ENCODE measurements at regions of chr6 and their contacts with region 1.

Region 1: GRCh38 chr6:25417046-25417605 is 138.0 kb downstream of the CARMIL1 start:
- DNase-seq: no peak
- H3K4me3 Mint-ChIP-seq: no peak overlapping the region
- H3K27ac Mint-ChIP-seq: no peak overlapping the region
- H3K4me1 Mint-ChIP-seq: peaks cover 62% of the 10 kb centered on the region
- H3K27me3 Mint-ChIP-seq: no peaks in the 10 kb centered on the region
- CTCF ChIP-seq: no peak

Region 2: DNA sequence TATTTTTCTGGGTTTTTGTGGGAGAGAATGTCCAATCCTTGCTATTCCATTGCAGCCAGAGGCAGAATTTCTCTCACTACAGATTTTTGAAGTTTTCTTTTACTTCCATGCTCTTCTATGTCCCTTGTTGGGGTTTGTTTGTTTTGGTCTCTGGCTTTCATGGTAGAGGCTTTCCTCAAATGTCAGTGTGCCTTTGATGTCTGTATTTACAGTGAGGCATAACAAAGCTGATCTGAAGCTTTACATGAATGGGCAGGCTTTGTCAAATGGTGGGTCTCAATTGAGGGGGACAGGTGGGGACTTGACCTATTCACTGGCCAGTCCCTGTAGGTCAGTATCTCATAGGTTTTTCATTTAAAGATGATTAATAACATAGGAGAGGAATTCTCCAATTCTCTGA is 146.6 kb before region 1 on chr6:
- CTCF ChIA-PET with region 1: interaction called, 10 read pairs
- intact Hi-C with region 1: no loop called
- DNase-seq: no peak
- H3K4me3 Mint-ChIP-seq: no peak overlapping the region
- H3K27ac Mint-ChIP-seq: no peak overlapping the region
- H3K4me1 Mint-ChIP-seq: peaks cover 14% of the 10 kb centered on the region
- H3K27me3 Mint-ChIP-seq: no peaks in the 10 kb centered on the region
- CTCF ChIP-seq: no peak

Region 3: DNA sequence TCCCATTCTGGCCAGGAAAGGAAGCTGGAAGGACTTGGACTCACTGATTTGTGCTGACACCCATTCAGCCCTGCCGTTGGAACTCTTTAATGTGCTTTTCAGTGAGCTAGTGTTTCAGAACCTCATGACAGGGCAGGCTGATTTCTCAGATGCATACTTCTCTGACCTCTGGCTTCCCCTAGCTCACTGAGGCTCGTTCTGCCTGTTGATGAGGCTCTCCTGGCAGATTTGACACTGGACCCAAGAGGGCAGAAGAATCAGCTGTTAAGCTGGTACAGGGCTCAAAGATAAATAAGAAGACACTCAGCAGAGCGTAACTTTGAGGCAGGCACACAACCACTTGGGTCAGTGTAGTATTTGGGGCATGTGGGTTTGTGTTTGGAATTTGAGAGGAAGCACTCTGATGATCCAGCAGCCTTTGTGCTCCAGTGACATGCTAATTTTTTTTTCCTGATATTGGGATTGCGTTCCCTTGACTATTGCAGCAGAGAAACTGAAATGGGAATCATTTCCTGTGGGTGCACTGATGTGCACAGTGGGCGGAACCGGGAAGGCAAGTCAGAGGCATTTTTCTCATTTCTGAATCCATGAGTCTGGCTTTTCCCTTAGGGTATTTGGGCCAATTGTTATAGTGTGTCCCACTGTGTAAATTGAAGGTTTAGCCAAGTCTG is 57.8 kb before region 1 on chr6:
- CTCF ChIA-PET with region 1: no interaction called
- intact Hi-C with region 1: loop called (anchors 5 kb)
- DNase-seq: peak; percentile 31
- H3K4me3 Mint-ChIP-seq: peak overlapping the region; percentile 48
- H3K27ac Mint-ChIP-seq: peak overlapping the region; percentile 71
- H3K4me1 Mint-ChIP-seq: peaks cover 57% of the 10 kb centered on the region
- H3K27me3 Mint-ChIP-seq: no peaks in the 10 kb centered on the region
- CTCF ChIP-seq: no peak

Region 4: GRCh38 chr6:25369433-25370181 is 47.5 kb before region 1 on chr6:
- CTCF ChIA-PET with region 1: interaction called, 3 read pairs
- intact Hi-C with region 1: loop called (anchors 5 kb)
- DNase-seq: peak; percentile 38
- H3K4me3 Mint-ChIP-seq: peak overlapping the region; percentile 56
- H3K27ac Mint-ChIP-seq: peak overlapping the region; percentile 60
- H3K4me1 Mint-ChIP-seq: peaks cover 83% of the 10 kb centered on the region
- H3K27me3 Mint-ChIP-seq: no peaks in the 10 kb centered on the region
- CTCF ChIP-seq: no peak

Region 5: DNA sequence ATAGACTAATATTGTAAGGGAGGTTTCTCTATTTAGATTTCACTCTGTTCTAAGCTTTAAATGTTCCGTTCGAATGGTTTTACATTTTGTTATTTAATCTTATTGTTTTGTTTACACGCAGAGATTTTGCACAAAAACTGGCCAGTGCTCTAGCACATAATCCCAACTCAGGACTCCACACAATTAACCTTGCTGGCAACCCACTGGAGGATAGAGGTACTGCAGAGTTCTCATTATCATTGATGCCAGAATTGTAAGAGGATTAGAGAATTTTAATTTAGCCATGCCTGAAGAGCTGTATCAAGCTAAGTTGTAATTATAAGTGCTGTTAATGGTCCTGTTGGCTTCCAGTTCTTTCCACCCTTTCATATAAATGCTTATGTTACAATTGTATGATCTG is 55.2 kb after region 1 on chr6:
- CTCF ChIA-PET with region 1: no interaction called
- intact Hi-C with region 1: loop called (anchors 5 kb)
- DNase-seq: no peak
- H3K4me3 Mint-ChIP-seq: no peak overlapping the region
- H3K27ac Mint-ChIP-seq: no peak overlapping the region
- H3K4me1 Mint-ChIP-seq: peaks cover 1% of the 10 kb centered on the region
- H3K27me3 Mint-ChIP-seq: no peaks in the 10 kb centered on the region
- CTCF ChIP-seq: peak; percentile 14